Breast epithelium (tissue), 4 donors: ENCODE measurements at regions of chrX and their contacts with region 1.

Region 1: GRCh38 chrX:19731307-19731820 is 156.0 kb downstream of the SH3KBP1 start:
- DNase-seq: no peak
- H3K4me3 ChIP-seq: no peak overlapping the region
- H3K27ac ChIP-seq: no peak overlapping the region
- H3K4me1 ChIP-seq: no peaks in the 10 kb centered on the region
- H3K27me3 ChIP-seq: peaks cover 0 to 9% of the 10 kb centered on the region in 2 donors
- CTCF ChIP-seq: no peak
- POLR2A ChIP-seq: no peak

Region 2: DNA sequence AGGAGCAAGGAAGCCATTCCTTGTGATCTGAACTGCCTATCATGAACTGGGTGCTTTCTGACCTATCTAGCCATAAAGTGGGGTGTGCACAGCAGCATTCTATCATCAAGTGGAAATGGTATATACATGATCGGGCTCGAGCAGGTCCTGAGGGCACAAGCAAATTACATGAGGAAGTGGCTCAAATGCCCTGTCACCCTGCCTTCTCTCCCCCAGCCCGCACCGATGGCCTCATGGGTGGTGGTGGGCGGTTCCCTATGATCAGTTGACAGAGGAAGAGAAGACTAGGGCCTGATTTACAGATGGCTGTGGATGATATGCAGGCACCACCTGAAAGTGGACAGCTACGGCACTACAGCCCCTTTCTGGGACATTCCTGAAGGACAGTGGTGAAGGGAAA is 305.8 kb after region 1 on chrX:
- intact Hi-C with region 1: loop called (anchors 5 kb)
- DNase-seq: no peak
- H3K4me3 ChIP-seq: no peak overlapping the region
- H3K27ac ChIP-seq: no peak overlapping the region
- H3K4me1 ChIP-seq: no peaks in the 10 kb centered on the region
- H3K27me3 ChIP-seq: peaks cover 0 to 14% of the 10 kb centered on the region in 2 donors
- CTCF ChIP-seq: no peak
- POLR2A ChIP-seq: no peak